ENCODE measurements at regions of chr10 and their contacts with region 1.

Region 1: GRCh38 chr10:75019370-75019769 is 92.1 kb upstream of the SAMD8 start:
- DNase-seq: no peak
- H3K4me3 ChIP-seq: no peak overlapping the region
- H3K27ac ChIP-seq: no peak overlapping the region
- H3K4me1 ChIP-seq: peaks cover 20 to 61% (median 52%) of the 10 kb centered on the region in 4 donors
- H3K27me3 ChIP-seq: no peaks in the 10 kb centered on the region
- CTCF ChIP-seq: peak; percentile 23 to 48 (median 44)
- EP300 ChIP-seq: no peak
- POLR2A ChIP-seq: no peak

Region 2: DNA sequence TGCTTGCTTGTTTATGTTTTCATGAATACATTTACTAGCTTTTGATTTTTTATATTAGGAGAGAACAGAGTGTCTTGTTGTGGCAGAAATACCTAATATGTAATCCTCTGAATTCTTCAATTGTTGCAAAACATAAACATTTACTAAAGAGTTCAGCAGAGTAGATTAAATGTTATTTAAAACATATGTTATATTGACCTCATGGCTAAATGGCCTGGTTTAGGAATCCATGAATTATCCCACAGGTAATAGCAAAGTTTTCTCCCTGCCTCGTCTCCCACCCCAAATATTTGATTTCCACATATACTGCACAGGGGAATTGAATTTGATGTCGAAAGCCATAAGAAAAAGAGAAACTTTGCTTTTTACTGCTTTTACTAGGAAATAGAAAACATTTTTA is 756.5 kb before region 1 on chr10:
- intact Hi-C with region 1: loop called (anchors 5 kb)
- DNase-seq: no peak
- H3K4me3 ChIP-seq: no peak overlapping the region
- H3K27ac ChIP-seq: no peak overlapping the region
- H3K4me1 ChIP-seq: peaks cover 0 to 14% (median 3%) of the 10 kb centered on the region in 4 donors
- H3K27me3 ChIP-seq: no peaks in the 10 kb centered on the region
- CTCF ChIP-seq: no peak
- EP300 ChIP-seq: no peak
- POLR2A ChIP-seq: no peak

Region 3: DNA sequence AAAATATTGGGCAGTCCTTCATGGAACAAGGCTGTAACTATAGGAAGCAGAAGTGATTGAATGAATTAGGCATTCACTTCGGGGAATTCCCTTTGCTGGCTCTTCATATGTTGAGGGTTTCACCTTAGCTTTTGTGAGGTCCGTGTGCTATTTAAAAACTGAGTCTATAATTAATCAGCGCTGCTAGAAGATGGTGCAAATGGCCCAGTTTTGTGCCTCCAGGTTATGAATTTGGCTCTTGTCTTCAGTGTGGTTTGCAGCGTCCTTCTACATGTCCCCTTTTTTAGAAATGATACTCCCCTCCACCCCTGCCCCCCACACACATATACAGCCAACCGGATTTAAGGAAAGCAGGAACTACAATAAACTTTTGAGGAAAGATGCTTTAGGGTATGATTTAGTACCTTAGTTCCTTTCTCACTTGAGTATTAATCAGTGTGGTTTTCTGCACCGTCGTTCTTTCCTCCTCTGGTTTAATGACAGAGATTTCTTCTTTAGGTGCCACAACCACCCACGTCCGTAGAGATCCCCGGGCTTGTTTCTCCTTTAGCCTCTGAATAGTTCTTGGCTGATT is 18.5 kb before region 1 on chr10:
- intact Hi-C with region 1: no loop called
- DNase-seq: no peak
- H3K4me3 ChIP-seq: no peak overlapping the region
- H3K27ac ChIP-seq: peak overlapping the region in 1 of 4 donors; percentile 26
- H3K4me1 ChIP-seq: peaks cover 0 to 19% (median 7%) of the 10 kb centered on the region in 4 donors
- H3K27me3 ChIP-seq: no peaks in the 10 kb centered on the region
- CTCF ChIP-seq: no peak
- EP300 ChIP-seq: no peak
- POLR2A ChIP-seq: no peak

Region 4: GRCh38 chr10:75350791-75351190 is 331.4 kb after region 1 on chr10:
- intact Hi-C with region 1: no loop called
- DNase-seq: peak; percentile 8
- H3K4me3 ChIP-seq: no peak overlapping the region
- H3K27ac ChIP-seq: no peak overlapping the region
- H3K4me1 ChIP-seq: no peaks in the 10 kb centered on the region
- H3K27me3 ChIP-seq: no peaks in the 10 kb centered on the region
- CTCF ChIP-seq: no peak
- EP300 ChIP-seq: no peak
- POLR2A ChIP-seq: no peak

Measured in esophagus muscularis mucosa (tissue), 4 donors.